ENCODE measurements at regions of chr14 and their contacts with region 1.

Region 1: DNA sequence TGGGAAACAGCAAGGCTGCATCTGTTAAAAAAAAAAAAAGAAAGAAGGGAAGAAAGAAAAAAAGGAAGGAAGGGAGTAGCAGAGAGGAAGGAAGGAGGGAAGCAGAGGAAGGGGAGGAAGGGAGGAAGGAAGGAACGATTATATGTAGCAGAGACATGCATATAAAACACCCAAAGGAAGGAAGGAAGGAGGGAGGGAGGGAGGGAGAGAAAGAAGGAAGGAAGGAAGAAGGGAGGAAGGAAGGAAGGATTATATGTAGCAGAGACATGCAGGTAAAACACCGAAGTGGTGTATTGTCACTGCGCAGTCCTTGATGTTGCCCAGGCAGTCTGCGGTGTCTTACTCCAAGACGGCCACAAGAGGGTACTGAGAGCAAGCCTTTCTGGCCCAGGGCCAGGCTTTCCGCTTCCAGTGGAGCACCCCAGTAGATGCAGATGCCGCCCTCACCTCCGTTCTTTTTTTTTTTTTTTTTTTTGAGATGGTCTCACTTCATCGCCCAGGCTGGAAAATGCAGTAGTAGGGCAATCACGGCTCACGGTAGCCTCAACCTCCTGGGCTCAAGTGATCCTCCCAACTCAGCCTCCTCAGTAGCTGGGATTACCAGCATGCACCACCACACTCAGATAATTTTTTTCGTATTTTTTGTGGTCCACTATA is 5.8 kb upstream of the LBHD2 start:
- DNase-seq: peak; percentile 81
- H3K4me3 Mint-ChIP-seq: no peak overlapping the region
- H3K27ac Mint-ChIP-seq: no peak overlapping the region
- H3K4me1 Mint-ChIP-seq: peaks cover 9% of the 10 kb centered on the region
- H3K27me3 Mint-ChIP-seq: no peaks in the 10 kb centered on the region
- CTCF ChIP-seq: peak; percentile 74

Region 2: DNA sequence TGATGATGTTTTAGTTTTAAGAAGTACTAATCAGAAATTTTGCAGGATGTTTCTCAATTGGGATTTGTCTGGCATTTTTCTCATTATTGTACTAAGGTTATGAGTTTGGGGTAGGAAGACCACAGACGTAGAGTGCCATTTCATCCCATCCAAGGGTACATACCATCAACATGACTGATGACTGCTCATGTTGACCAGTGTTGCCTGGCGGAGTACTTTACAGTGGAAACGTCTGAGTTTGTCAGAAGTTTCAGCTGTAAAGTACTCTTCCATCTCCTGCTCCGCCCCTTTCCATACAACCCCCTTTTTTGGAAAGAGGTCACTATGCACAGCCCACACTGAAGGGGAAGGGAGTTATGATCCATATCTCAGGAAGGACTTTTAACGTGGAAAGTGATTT is 411.6 kb before region 1 on chr14:
- CTCF ChIA-PET with region 1: no interaction called
- intact Hi-C with region 1: no loop called
- DNase-seq: no peak
- H3K4me3 Mint-ChIP-seq: no peak overlapping the region
- H3K27ac Mint-ChIP-seq: no peak overlapping the region
- H3K4me1 Mint-ChIP-seq: peaks cover 42% of the 10 kb centered on the region
- H3K27me3 Mint-ChIP-seq: no peaks in the 10 kb centered on the region
- CTCF ChIP-seq: no peak

Region 3: GRCh38 chr14:103031956-103032355 is 46.3 kb before region 1 on chr14:
- CTCF ChIA-PET with region 1: interaction called, 4 read pairs
- intact Hi-C with region 1: loop called (anchors 5 kb)
- DNase-seq: peak; percentile 71
- H3K4me3 Mint-ChIP-seq: no peak overlapping the region
- H3K27ac Mint-ChIP-seq: peak overlapping the region; percentile 25
- H3K4me1 Mint-ChIP-seq: peaks cover 8% of the 10 kb centered on the region
- H3K27me3 Mint-ChIP-seq: no peaks in the 10 kb centered on the region
- CTCF ChIP-seq: peak; percentile 14

Region 4: GRCh38 chr14:103292426-103293374 is 214.5 kb after region 1 on chr14:
- CTCF ChIA-PET with region 1: interaction called, 3 read pairs
- intact Hi-C with region 1: loop called (anchors 2 kb)
- DNase-seq: peak; percentile 88
- H3K4me3 Mint-ChIP-seq: no peak overlapping the region
- H3K27ac Mint-ChIP-seq: no peak overlapping the region
- H3K4me1 Mint-ChIP-seq: peaks cover 8% of the 10 kb centered on the region
- H3K27me3 Mint-ChIP-seq: no peaks in the 10 kb centered on the region
- CTCF ChIP-seq: peak; percentile 89

Measured in Calu3 (cell line).